Activated CD8-positive, alpha-beta T cell treated with anti-CD3 and anti-CD28 coated beads for 36 hours (primary cell): ENCODE measurements at regions of chr15 and their contacts with region 1.

Region 1: DNA sequence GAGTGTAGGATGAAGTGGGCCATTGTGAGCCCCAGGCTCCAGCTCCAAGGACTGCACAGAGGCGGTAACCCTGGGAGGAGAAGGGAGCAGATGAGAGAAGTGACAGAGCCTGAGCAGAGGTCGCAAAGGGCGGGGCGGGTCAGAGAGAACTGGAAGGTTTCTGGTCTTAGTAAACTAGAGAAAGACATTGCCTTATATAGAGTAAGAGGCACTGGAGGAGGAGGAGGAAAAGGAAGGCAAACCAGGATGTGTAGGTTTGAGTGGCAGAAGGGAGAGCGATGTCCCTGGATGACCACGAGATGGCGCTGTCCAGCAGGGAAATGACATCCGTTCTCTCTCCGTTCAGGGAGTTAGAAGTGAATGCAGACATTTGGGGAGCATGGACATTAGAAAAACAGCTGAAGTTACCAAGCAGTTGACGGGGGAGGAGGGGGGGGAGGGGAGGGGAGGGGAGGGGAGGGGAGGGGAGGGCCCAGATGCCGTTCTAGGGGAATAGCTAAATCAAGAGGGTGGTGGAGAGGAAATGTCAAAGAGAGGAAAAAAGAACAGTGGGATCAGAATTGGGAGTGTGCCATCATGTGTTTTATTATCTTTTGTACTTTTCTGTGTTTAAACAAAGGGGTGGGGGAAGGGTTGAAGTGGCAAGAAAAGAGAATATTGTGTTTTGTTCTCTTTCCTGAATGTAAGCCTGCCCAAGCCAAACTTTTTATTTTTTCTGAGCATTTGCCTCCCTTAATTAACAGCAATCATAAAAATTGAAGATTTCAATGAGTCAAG is 48.8 kb downstream of the STARD5 start:
- DNase-seq: peak; percentile 72
- ATAC-seq: peak; percentile 82
- H3K4me3 Mint-ChIP-seq: no peak overlapping the region
- H3K27ac Mint-ChIP-seq: peak overlapping the region; percentile 49
- H3K4me1 Mint-ChIP-seq: peaks cover 52% of the 10 kb centered on the region
- H3K27me3 Mint-ChIP-seq: no peaks in the 10 kb centered on the region
- CTCF ChIP-seq: peak; percentile 74

Region 2: GRCh38 chr15:81126892-81127291 is 148.2 kb before region 1 on chr15:
- CTCF ChIA-PET with region 1: no interaction called
- POLR2A ChIA-PET with region 1: no interaction called
- intact Hi-C with region 1: no loop called
- DNase-seq: no peak
- ATAC-seq: no peak
- H3K4me3 Mint-ChIP-seq: no peak overlapping the region
- H3K27ac Mint-ChIP-seq: no peak overlapping the region
- H3K4me1 Mint-ChIP-seq: no peaks in the 10 kb centered on the region
- H3K27me3 Mint-ChIP-seq: peaks cover 36% of the 10 kb centered on the region
- CTCF ChIP-seq: no peak

Region 3: GRCh38 chr15:81199031-81199779 is 75.9 kb before region 1 on chr15:
- CTCF ChIA-PET with region 1: no interaction called
- POLR2A ChIA-PET with region 1: no interaction called
- intact Hi-C with region 1: no loop called
- DNase-seq: no peak
- ATAC-seq: no peak
- H3K4me3 Mint-ChIP-seq: no peak overlapping the region
- H3K27ac Mint-ChIP-seq: no peak overlapping the region
- H3K4me1 Mint-ChIP-seq: no peaks in the 10 kb centered on the region
- H3K27me3 Mint-ChIP-seq: peaks cover 1% of the 10 kb centered on the region
- CTCF ChIP-seq: no peak

Region 4: DNA sequence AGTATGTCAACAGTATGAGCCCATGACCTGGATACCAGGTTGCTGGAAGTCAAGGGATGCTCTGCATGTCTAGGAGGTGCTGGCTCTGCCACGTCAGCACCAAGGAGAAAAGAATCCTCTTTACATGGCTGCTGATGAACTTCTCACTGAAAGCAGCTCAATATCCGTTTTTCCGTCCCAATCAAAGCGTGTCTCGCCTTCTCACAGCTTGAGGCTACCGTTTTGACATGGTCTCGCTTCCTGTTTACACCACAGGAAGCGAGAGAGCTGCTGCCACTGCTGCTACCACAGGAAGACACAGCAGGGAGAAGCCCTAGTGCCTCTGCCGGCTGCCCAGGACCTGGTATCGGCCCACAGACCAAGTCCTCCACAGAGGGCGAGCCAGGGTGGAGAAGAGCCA is 21.6 kb after region 1 on chr15:
- CTCF ChIA-PET with region 1: interaction called, 90 read pairs
- POLR2A ChIA-PET with region 1: interaction called, 42 read pairs
- intact Hi-C with region 1: no loop called
- DNase-seq: peak; percentile 89
- ATAC-seq: peak; percentile 49
- H3K4me3 Mint-ChIP-seq: peak overlapping the region; percentile 98
- H3K27ac Mint-ChIP-seq: peak overlapping the region; percentile 98
- H3K4me1 Mint-ChIP-seq: peaks cover 51% of the 10 kb centered on the region
- H3K27me3 Mint-ChIP-seq: no peaks in the 10 kb centered on the region
- CTCF ChIP-seq: no peak

Region 5: GRCh38 chr15:81312790-81313543 is 37.8 kb after region 1 on chr15:
- CTCF ChIA-PET with region 1: interaction called, 24 read pairs
- POLR2A ChIA-PET with region 1: interaction called, 4 read pairs
- intact Hi-C with region 1: no loop called
- DNase-seq: no peak
- ATAC-seq: no peak
- H3K4me3 Mint-ChIP-seq: no peak overlapping the region
- H3K27ac Mint-ChIP-seq: peak overlapping the region; percentile 69
- H3K4me1 Mint-ChIP-seq: peaks cover 72% of the 10 kb centered on the region
- H3K27me3 Mint-ChIP-seq: no peaks in the 10 kb centered on the region
- CTCF ChIP-seq: no peak

Region 6: GRCh38 chr15:81330366-81331090 is 55.4 kb after region 1 on chr15:
- CTCF ChIA-PET with region 1: interaction called, 25 read pairs
- POLR2A ChIA-PET with region 1: interaction called, 5 read pairs
- intact Hi-C with region 1: loop called (anchors 5 kb)
- DNase-seq: no peak
- ATAC-seq: no peak
- H3K4me3 Mint-ChIP-seq: no peak overlapping the region
- H3K27ac Mint-ChIP-seq: no peak overlapping the region
- H3K4me1 Mint-ChIP-seq: peaks cover 19% of the 10 kb centered on the region
- H3K27me3 Mint-ChIP-seq: no peaks in the 10 kb centered on the region
- CTCF ChIP-seq: no peak

Region 7: DNA sequence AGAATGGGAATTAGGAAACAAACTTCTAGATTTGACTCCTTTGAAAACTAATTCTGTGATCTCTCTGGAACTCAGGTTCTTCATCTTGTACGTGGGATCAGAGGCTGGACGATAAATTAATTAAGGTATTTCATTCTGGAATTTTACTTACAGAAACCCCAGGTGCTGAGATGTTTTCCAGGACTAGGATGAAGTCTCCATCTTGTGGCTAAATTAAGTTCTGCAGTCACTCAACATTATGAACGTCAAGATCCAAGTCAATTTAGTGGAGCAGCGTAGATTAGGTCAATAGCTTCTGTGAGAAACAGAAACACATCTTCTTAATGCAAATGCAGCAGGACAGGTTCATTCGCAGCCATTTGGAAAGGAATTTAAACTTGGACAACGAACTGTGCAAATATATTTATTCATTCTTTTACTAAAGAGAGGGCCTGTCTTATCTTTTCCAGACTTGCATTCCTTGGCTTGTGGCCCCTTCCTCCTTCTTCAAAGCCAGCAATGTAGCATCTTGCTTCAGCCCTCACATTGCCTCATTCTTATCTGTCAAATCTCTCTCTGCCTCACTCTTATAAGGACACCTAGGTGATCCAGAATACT is 125.6 kb after region 1 on chr15:
- CTCF ChIA-PET with region 1: interaction called, 97 read pairs
- POLR2A ChIA-PET with region 1: no interaction called
- intact Hi-C with region 1: loop called (anchors 1 kb)
- DNase-seq: no peak
- ATAC-seq: no peak
- H3K4me3 Mint-ChIP-seq: no peak overlapping the region
- H3K27ac Mint-ChIP-seq: no peak overlapping the region
- H3K4me1 Mint-ChIP-seq: peaks cover 3% of the 10 kb centered on the region
- H3K27me3 Mint-ChIP-seq: no peaks in the 10 kb centered on the region
- CTCF ChIP-seq: peak; percentile 82